CD14-positive monocyte (primary cell): ENCODE measurements at regions of chr17 and their contacts with region 1.

Region 1: GRCh38 chr17:2796164-2797125 is at the start of gene RAP1GAP2:
- DNase-seq: peak; percentile 88 to 92 (median 92)
- H3K4me3 ChIP-seq: peak within 1 kb of the TSS; percentile 78 to 88 (median 87)
- H3K4me3 Mint-ChIP-seq: peak within 1 kb of the TSS; percentile 95 to 97
- H3K27ac ChIP-seq: peak within 1 kb of the TSS; percentile 61 to 90
- H3K27ac Mint-ChIP-seq: peak within 1 kb of the TSS; percentile 85 to 95 (median 94)
- H3K4me1 ChIP-seq: peaks cover 64 to 74% of the 10 kb centered on the region in 2 donors
- H3K4me1 Mint-ChIP-seq: peaks cover 80% of the 10 kb centered on the region
- H3K27me3 ChIP-seq: no peaks in the 10 kb centered on the region
- H3K27me3 Mint-ChIP-seq: no peaks in the 10 kb centered on the region
- CTCF ChIP-seq: peak; percentile 25
- polyA plus RNA-seq, gene RAP1GAP2: 1.5 to 48.4 (median 6.1) TPM

Region 2: DNA sequence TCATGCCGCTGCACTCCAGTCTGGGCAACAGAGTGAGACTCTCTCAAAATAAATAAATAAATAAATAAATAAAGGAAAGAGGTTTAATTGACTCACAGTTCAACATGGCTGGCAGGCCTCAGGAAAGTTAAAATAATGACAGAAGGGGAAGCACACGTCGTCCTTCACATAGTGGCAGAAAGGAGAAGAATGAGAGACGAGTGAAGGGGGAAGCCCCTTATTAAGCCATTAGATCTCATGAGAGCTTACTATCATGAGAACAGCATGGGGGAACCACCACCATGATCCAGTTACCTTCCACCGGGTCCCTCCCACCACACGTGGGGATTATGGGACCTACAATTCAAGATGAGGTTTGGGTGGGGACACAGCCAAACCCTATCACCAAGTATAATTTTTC is 148.5 kb before region 1 on chr17:
- intact Hi-C with region 1: no loop called
- DNase-seq: peak; percentile 23 to 73 (median 37)
- H3K4me3 ChIP-seq: no peak overlapping the region
- H3K4me3 Mint-ChIP-seq: no peak overlapping the region
- H3K27ac ChIP-seq: peak overlapping the region in 1 of 2 donors; percentile 44
- H3K27ac Mint-ChIP-seq: peak overlapping the region in 5 of 7 donors; percentile 49 to 82 (median 76)
- H3K4me1 ChIP-seq: no peaks in the 10 kb centered on the region
- H3K4me1 Mint-ChIP-seq: peaks cover 3% of the 10 kb centered on the region
- H3K27me3 ChIP-seq: no peaks in the 10 kb centered on the region
- H3K27me3 Mint-ChIP-seq: peaks cover 0 to 3% (median 0%) of the 10 kb centered on the region in 3 donors
- CTCF ChIP-seq: no peak

Region 3: GRCh38 chr17:2814481-2815341 is 18.3 kb after region 1 on chr17:
- intact Hi-C with region 1: no loop called
- DNase-seq: peak in 2 of 3 donors; percentile 49 to 52
- H3K4me3 ChIP-seq: peak overlapping the region; percentile 11 to 77 (median 24)
- H3K4me3 Mint-ChIP-seq: peak overlapping the region; percentile 75 to 90
- H3K27ac ChIP-seq: peak overlapping the region; percentile 29 to 73
- H3K27ac Mint-ChIP-seq: peak overlapping the region; percentile 48 to 87 (median 71)
- H3K4me1 ChIP-seq: peaks cover 38 to 50% of the 10 kb centered on the region in 2 donors
- H3K4me1 Mint-ChIP-seq: peaks cover 60% of the 10 kb centered on the region
- H3K27me3 ChIP-seq: no peaks in the 10 kb centered on the region
- H3K27me3 Mint-ChIP-seq: no peaks in the 10 kb centered on the region
- CTCF ChIP-seq: no peak

Region 4: GRCh38 chr17:2853111-2853721 is 56.8 kb after region 1 on chr17:
- intact Hi-C with region 1: loop called in 1 of 2 experiments (anchors 10 kb)
- DNase-seq: peak; percentile 27 to 38 (median 36)
- H3K4me3 ChIP-seq: peak overlapping the region; percentile 27 to 78 (median 58)
- H3K4me3 Mint-ChIP-seq: peak overlapping the region; percentile 69 to 87
- H3K27ac ChIP-seq: no peak overlapping the region
- H3K27ac Mint-ChIP-seq: no peak overlapping the region
- H3K4me1 ChIP-seq: peaks cover 22 to 39% of the 10 kb centered on the region in 2 donors
- H3K4me1 Mint-ChIP-seq: peaks cover 38% of the 10 kb centered on the region
- H3K27me3 ChIP-seq: peaks cover 5 to 21% of the 10 kb centered on the region in 2 donors
- H3K27me3 Mint-ChIP-seq: peaks cover 25 to 43% (median 40%) of the 10 kb centered on the region in 3 donors
- CTCF ChIP-seq: no peak

Region 5: DNA sequence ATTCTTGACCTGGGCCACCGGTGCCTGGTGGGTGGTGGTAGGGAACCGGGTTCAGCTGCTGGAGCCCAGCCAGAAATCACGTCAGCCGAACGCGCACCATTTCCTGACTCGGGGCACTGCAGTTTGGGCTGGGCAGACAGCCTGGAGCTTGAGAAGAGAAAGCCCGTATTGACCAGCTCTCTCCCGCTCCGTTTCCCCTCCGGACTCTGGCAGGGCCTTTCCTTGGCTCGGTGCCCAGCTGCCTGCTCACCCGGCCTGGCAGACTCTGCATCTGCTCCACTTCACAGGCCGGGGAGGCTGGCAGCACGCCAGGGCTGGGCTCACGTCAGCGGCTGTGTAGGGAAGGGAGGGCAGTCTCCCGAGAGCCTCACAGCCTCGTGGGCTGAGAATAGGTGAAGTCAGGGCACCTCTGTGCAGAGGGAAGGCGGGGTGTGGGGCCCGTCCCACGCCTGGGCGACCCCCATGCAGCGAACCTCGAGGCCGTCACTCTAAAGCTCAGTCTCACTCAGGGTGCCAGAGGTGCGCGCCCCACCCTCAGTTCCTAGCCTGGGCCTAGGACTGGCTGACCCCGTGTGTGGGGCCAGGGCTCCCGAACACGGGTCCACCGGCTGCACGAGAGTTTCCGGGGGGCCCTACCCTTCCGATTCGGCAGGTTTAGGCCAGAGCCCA is 207.8 kb after region 1 on chr17:
- intact Hi-C with region 1: loop called in 1 of 2 experiments (anchors 10 kb)
- DNase-seq: peak; percentile 95 to 97 (median 96)
- H3K4me3 ChIP-seq: peak overlapping the region in 2 of 3 experiments; percentile 10 to 53
- H3K4me3 Mint-ChIP-seq: peak overlapping the region; percentile 74 to 78
- H3K27ac ChIP-seq: peak overlapping the region; percentile 73 to 78
- H3K27ac Mint-ChIP-seq: peak overlapping the region; percentile 93 to 98 (median 97)
- H3K4me1 ChIP-seq: peaks cover 38% of the 10 kb centered on the region in 2 donors
- H3K4me1 Mint-ChIP-seq: peaks cover 40% of the 10 kb centered on the region
- H3K27me3 ChIP-seq: no peaks in the 10 kb centered on the region
- H3K27me3 Mint-ChIP-seq: peaks cover 0 to 2% (median 0%) of the 10 kb centered on the region in 3 donors
- CTCF ChIP-seq: no peak